ENCODE measurements at regions of chr1 and their contacts with region 1.

Region 1: DNA sequence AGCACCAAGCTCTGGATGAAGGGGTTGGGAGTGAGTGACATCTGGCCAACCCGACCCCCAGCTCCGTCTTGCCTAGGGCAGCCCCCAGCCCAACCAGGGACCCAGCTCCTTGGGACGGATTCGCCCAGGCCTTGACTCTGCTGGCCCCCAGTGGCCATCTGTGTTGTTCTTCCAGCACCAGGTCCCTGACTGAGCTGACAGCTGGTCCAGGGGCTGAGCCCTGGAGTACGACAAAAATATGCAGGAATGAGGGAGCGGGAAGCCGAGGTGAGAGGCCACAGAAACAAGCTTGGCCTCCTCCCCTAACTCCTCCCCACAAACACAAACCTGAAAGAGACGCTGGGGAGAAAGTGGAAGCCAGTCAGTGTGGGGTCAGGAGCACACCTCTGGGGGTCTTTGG is 55.0 kb upstream of the PAX7 start:
- DNase-seq: no peak

Region 2: DNA sequence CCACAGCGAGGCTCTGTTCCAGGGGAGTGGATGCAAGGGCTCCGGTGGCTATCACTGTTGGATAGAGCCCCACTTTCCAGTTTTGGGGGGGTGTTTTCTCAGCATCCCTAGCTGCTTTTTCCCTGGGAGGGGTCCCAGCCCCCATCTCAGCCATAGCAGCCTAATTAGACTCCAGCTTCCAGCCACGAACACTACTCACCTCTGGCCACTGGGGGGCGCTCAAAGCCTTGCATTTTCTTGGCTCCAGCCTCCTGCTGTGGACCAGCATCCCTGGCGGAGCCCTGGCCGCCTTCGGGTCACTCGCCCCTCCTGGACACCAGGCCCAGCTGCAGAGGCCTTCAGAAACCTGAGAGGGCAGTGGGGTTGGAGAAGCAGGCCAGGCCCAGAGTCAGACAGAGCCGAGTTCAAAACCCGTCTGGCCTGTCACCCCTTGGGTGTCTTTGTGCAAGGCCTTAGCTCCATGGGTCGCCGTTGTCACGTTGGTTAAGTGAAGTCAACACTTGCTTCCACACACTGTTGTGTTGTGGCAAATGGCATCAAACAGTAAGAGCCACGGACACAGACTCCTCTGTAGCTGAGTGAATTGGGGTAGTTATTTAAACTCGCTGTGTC is 914.0 kb before region 1 on chr1:
- intact Hi-C with region 1: loop called (anchors 10 kb)
- DNase-seq: no peak

Region 3: GRCh38 chr1:17922833-17923232 is 652.8 kb before region 1 on chr1:
- intact Hi-C with region 1: loop called (anchors 5 kb)
- DNase-seq: no peak

Region 4: GRCh38 chr1:18408656-18409370 is 166.8 kb before region 1 on chr1:
- intact Hi-C with region 1: no loop called
- DNase-seq: peak; percentile 50

Region 5: GRCh38 chr1:18597160-18598042 is 21.8 kb after region 1 on chr1:
- intact Hi-C with region 1: no loop called
- DNase-seq: no peak

Measured in cardiac septum (tissue), 1 donor.